Stomach (tissue), 19 donors: ENCODE measurements at regions of chr1 and their contacts with region 1.

Region 1: GRCh38 chr1:154559466-154560088 is 1.1 kb upstream of the UBE2Q1 start:
- DNase-seq: peak; percentile 89 to 96
- H3K4me3 ChIP-seq: peak overlapping the region; percentile 63 to 95 (median 92)
- H3K27ac ChIP-seq: peak overlapping the region; percentile 91 to 97 (median 95)
- H3K4me1 ChIP-seq: peaks cover 24 to 47% (median 39%) of the 10 kb centered on the region in 4 donors
- H3K27me3 ChIP-seq: no peaks in the 10 kb centered on the region
- CTCF ChIP-seq: peak in 5 of 7 experiments; percentile 86 to 95 (median 92)
- EP300 ChIP-seq: no peak
- POLR2A ChIP-seq: no peak

Region 2: GRCh38 chr1:154295408-154296235 is 264.0 kb before region 1 on chr1:
- intact Hi-C with region 1: no loop called
- DNase-seq: no peak
- H3K4me3 ChIP-seq: no peak overlapping the region
- H3K27ac ChIP-seq: no peak overlapping the region
- H3K4me1 ChIP-seq: no peaks in the 10 kb centered on the region
- H3K27me3 ChIP-seq: no peaks in the 10 kb centered on the region
- CTCF ChIP-seq: no peak
- EP300 ChIP-seq: no peak
- POLR2A ChIP-seq: no peak

Region 3: GRCh38 chr1:154747740-154748404 is 188.3 kb after region 1 on chr1:
- intact Hi-C with region 1: loop called (anchors 10 kb)
- DNase-seq: peak in 1 of 2 donors; percentile 87
- H3K4me3 ChIP-seq: no peak overlapping the region
- H3K27ac ChIP-seq: peak overlapping the region in 2 of 5 donors; percentile 9 to 15
- H3K4me1 ChIP-seq: peaks cover 8 to 31% (median 17%) of the 10 kb centered on the region in 4 donors
- H3K27me3 ChIP-seq: peaks cover 0 to 62% (median 0%) of the 10 kb centered on the region in 3 donors
- CTCF ChIP-seq: no peak
- EP300 ChIP-seq: no peak
- POLR2A ChIP-seq: no peak

Region 4: DNA sequence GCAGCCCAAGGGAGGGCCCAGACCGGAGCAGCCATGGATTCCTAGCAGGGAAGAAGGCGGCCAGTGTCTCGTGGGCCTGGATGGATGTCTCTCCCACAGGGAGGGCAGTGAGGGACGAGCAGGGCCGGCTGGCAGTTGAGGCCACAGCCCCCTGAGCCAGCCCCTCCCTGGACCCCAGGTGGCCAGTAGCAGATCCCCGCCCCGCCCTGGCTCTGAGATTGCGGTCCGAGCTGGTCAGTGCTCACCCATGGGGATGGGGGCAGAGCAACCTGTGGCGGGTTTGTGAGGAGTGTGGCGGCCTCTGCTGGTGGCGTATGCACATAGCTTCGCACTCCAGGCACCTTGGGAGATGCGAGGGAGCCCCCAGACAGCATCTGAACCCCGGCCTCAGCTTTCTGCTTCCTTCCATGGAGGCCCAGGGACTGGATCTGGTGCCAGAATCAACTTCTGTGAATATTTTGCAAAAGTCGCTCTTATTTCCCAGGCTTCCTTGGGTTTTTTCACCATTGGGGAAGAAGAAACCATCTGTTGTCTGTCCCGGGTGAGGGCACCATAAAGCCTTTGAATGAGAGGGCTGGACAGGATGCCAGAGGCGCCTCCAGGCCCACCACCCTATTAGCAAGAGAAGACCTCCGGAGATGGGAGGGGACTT is 318.9 kb after region 1 on chr1:
- intact Hi-C with region 1: loop called (anchors 5 kb)
- DNase-seq: peak; percentile 83 to 92
- H3K4me3 ChIP-seq: no peak overlapping the region
- H3K27ac ChIP-seq: no peak overlapping the region
- H3K4me1 ChIP-seq: peaks cover 0 to 19% (median 4%) of the 10 kb centered on the region in 4 donors
- H3K27me3 ChIP-seq: peaks cover 0 to 8% (median 0%) of the 10 kb centered on the region in 3 donors
- CTCF ChIP-seq: peak in 5 of 7 experiments; percentile 74 to 90 (median 75)
- EP300 ChIP-seq: no peak
- POLR2A ChIP-seq: no peak